A673 (cell line): ENCODE measurements at regions of chr7 and their contacts with region 1.

Region 1: DNA sequence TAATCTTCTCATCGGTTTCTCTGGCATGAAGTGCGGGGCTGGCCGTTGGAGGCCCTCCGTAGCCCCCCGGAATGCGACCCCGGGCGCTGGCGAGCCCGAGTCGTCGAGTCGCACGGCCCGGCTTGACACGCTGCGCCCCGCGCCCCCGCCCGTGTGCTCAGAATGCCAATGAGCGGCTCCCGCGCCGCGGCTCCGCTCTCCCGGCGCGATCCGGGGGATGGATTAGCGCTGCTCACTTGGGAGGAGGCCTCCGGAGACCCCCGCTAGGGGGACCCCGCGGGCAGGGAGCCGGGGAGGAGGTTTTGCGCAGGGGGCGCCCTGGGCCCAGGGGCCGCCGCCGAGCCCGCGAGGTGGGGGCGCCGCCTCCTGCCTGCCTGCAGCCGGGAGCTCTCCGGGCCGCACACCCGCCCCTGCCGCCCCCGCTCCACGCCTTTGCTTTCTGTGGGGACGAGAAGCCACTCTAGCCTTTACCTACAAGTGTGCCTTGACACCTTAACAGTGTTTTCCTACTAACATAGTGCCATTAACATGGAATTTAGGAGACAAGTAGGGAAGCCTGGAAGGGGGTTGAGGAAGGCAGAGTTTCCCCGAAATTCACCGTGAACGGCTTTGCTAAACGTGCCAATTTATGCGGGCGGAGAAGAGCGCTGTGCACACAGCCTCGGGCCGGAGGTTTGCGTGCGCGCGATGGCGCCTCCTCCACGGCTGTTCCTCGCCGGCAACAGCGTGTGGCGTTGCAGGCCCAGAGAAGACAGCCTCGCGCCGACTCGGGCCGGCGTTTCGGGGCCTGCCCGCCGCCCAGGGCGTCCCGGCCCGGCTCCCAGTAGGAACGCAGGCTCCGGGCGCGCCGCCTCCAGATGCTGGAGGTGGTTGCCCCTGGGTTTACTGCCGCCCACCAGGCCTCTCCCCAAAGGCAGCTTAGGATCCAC is 7.1 kb downstream of the SHH start:
- DNase-seq: peak; percentile 87
- H3K4me3 ChIP-seq: peak overlapping the region; percentile 32
- H3K27ac ChIP-seq: no peak overlapping the region
- H3K4me1 ChIP-seq: peaks cover 11% of the 10 kb centered on the region
- H3K27me3 ChIP-seq: peaks cover 89% of the 10 kb centered on the region
- CTCF ChIP-seq: peak; percentile 71

Region 2: DNA sequence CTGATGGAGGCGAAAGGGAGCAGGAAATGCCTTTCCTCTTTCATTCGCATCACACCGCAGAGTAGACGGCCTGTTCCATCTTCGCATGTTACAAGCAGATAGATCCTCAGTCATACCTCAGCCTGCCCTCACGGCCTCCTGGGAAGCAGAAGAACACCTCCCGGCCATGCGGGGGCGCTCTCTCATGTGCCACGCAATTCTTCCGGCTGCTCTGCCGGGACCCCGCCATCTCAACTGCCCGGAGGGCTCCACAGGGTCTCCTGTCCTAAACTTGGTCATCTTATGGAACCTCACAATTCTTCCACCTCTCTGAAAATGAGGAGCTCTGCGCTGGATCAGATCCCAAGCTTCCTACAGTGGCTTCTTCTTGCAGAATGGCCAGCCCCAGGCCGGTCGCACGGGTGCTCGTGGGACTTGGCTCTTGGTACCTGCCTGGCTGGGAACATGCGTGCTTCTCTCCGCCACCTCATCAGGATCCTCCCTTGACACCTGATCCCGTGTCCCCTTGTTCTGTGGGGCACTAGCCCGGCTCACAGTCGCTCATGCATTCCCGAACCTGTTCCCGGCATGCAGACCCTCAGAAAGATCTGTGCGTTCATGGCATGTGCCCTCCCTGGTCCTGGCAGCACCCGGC is 269.9 kb after region 1 on chr7:
- CTCF ChIA-PET with region 1: no interaction called
- POLR2A ChIA-PET with region 1: no interaction called
- intact Hi-C with region 1: no loop called
- DNase-seq: no peak
- H3K4me3 ChIP-seq: no peak overlapping the region
- H3K27ac ChIP-seq: no peak overlapping the region
- H3K4me1 ChIP-seq: no peaks in the 10 kb centered on the region
- H3K27me3 ChIP-seq: peaks cover 39% of the 10 kb centered on the region
- CTCF ChIP-seq: no peak

Region 3: DNA sequence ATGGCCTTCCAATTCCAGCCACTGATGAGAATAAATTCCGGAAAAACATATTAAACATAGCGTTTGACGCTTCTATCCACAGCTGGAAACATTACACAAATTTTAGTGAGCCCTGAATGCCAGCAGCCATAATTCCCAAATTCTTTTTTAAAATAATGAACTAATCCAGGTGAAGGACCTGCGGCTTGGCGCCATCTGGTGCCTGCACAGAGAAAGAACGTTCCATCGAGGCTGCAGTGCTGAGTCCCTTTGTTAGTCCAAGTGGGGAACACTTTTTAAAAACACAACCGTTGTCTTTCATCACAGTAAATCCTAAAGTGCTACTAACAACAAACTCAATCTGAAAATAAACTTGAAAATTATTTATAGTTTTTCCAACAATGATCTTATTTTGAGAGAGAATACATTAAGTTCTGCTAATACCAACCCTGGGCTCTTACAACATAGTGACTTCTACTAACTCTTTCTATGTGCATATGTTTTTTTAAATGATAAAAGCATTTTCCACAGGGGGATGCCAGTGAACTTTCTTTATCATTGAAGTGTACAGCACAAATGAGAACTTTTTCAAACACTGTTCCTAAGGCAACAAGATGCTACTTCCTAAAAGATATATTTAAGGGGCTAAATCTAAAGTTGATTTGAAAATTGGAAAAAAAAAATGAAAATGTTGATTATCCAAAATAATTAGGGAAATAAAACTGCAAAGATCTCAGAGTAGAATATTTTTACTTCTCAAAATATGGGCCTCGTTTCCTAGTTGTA is 668.5 kb after region 1 on chr7:
- CTCF ChIA-PET with region 1: no interaction called
- POLR2A ChIA-PET with region 1: no interaction called
- intact Hi-C with region 1: loop called (anchors 2 kb)
- DNase-seq: peak; percentile 43
- H3K4me3 ChIP-seq: no peak overlapping the region
- H3K27ac ChIP-seq: no peak overlapping the region
- H3K4me1 ChIP-seq: no peaks in the 10 kb centered on the region
- H3K27me3 ChIP-seq: peaks cover 48% of the 10 kb centered on the region
- CTCF ChIP-seq: peak; percentile 83

Region 4: DNA sequence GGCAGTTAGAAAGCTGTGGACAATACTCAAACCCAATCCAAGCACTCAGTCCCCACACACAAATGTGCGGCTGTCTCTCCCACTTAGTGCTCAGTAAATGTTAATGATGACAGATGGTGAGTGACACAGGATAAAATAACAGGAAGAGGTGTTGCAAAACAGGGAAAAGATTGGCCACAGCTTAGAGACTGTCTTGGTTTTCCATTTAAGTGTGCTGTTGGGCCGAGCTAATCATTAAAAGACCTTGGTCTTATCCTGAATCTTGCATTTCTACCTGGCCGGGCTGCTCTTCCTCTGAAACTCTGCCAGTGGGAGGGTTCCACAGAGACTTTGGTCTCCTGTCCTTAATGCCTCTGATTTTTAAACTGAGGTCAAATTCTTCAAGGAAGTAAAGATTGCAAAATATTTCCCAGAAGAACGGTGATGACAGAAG is 722.3 kb after region 1 on chr7:
- CTCF ChIA-PET with region 1: interaction called, 14 read pairs
- POLR2A ChIA-PET with region 1: no interaction called
- intact Hi-C with region 1: no loop called
- DNase-seq: no peak
- H3K4me3 ChIP-seq: no peak overlapping the region
- H3K27ac ChIP-seq: no peak overlapping the region
- H3K4me1 ChIP-seq: no peaks in the 10 kb centered on the region
- H3K27me3 ChIP-seq: peaks cover 19% of the 10 kb centered on the region
- CTCF ChIP-seq: no peak

Region 5: GRCh38 chr7:156816943-156817572 is 1011.9 kb after region 1 on chr7:
- CTCF ChIA-PET with region 1: no interaction called
- POLR2A ChIA-PET with region 1: no interaction called
- intact Hi-C with region 1: loop called (anchors 5 kb)
- DNase-seq: peak; percentile 19
- H3K4me3 ChIP-seq: no peak overlapping the region
- H3K27ac ChIP-seq: no peak overlapping the region
- H3K4me1 ChIP-seq: no peaks in the 10 kb centered on the region
- H3K27me3 ChIP-seq: no peaks in the 10 kb centered on the region
- CTCF ChIP-seq: peak; percentile 57

Region 6: GRCh38 chr7:157292699-157293412 is 1487.7 kb after region 1 on chr7:
- CTCF ChIA-PET with region 1: interaction called, 15 read pairs
- POLR2A ChIA-PET with region 1: no interaction called
- intact Hi-C with region 1: no loop called
- DNase-seq: no peak
- H3K4me3 ChIP-seq: no peak overlapping the region
- H3K27ac ChIP-seq: no peak overlapping the region
- H3K4me1 ChIP-seq: peaks cover 15% of the 10 kb centered on the region
- H3K27me3 ChIP-seq: no peaks in the 10 kb centered on the region
- CTCF ChIP-seq: no peak